ENCODE measurements at regions of chr17 and their contacts with region 1.

Region 1: GRCh38 chr17:40443583-40444327 is 505 bp downstream of the IGFBP4 start:
- DNase-seq: peak; percentile 73 to 94 (median 86)
- ATAC-seq: peak; percentile 62
- H3K4me3 ChIP-seq: peak overlapping the region; percentile 64 to 67
- H3K27ac ChIP-seq: peak overlapping the region; percentile 87 to 93
- H3K4me1 ChIP-seq: peaks cover 33 to 54% of the 10 kb centered on the region in 2 donors
- H3K27me3 ChIP-seq: peaks cover 0 to 25% of the 10 kb centered on the region in 2 donors
- CTCF ChIP-seq: peak; percentile 7 to 35

Region 2: DNA sequence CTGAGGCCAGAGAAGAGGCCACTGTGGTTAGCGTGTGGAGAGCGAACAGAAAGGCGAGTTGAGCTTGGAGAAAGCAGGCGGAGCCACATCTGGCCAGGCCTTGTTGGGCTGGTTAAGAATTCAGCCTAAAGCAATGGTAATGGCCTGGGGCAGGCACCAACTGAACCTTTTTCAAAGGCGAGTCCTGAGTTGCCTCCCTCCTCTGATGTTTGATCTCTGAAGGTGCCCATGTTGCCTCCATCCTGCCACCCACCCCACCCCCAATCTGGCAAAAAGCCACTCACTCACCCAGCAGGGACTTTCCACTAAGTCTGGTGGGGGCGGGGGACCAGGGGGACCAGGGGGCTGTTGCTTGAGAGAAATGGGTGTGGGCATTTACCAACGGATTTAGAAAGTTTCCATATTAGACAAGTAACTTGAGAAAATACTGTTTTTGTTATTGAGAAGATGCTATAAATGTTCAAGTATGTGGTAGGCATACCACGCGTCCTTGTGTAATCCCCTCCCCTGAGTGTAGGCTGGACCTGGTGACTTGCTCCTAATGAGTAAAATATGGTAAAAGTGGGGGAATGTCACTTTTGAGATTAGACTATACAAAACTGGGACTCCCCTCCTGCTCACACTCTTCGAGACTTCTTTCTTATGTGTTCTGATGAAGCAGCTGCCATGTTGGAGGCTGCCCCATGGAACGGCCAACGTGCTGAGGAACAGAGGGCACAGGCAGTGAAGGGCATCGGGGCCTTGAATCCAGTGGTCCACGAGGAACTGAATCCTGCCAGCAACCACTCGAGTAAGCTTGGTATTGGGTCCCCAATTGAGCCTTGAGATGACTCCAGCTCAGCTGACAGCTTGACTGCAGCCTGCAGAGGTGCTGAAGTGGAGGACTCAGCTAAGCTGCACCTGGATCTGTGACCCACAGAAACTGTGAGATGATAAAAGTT is 87.6 kb after region 1 on chr17:
- intact Hi-C with region 1: loop called in 1 of 2 experiments (anchors 5 kb)
- DNase-seq: peak in 1 of 4 donors; percentile 28
- ATAC-seq: no peak
- H3K4me3 ChIP-seq: no peak overlapping the region
- H3K27ac ChIP-seq: peak overlapping the region in 1 of 2 donors; percentile 23
- H3K4me1 ChIP-seq: peaks cover 19 to 32% of the 10 kb centered on the region in 2 donors
- H3K27me3 ChIP-seq: no peaks in the 10 kb centered on the region
- CTCF ChIP-seq: no peak

Region 3: DNA sequence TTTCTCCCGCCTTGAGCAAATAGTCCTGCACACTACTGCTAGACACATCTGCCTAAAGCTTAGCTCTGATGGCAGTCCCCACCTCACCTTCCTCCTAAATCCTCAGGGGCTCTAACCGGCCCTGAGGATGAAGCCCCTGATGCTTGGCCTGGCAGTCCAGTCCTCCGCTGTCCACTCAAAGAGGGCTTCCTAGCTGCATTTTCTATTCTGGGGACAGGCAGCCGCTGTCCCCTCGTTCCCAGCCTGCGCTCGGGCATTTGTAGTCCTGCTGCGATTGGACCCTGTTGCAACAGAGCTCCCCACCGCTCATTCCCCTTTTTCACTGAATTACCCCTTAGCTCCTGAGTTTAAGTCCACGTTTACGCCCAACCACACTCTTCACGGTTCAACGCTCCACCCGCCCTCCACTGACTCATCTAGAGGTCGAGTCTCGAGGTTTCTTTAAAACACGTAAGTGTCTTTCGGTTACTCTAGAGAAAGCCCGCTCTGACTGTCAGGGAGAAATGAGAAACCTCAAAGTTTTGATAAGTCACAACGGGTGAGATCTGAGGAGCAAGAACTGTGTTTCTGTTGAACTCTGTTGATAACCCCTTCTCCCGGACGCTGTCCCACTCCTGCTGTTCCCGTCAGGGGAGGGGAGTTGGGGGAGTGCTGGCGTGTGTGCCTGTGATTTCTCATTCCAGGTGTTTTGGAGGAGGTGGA is 117.0 kb after region 1 on chr17:
- intact Hi-C with region 1: no loop called
- DNase-seq: no peak
- ATAC-seq: peak; percentile 2
- H3K4me3 ChIP-seq: peak overlapping the region in 1 of 2 donors; percentile 1
- H3K27ac ChIP-seq: peak overlapping the region in 1 of 2 donors; percentile 65
- H3K4me1 ChIP-seq: peaks cover 15 to 35% of the 10 kb centered on the region in 2 donors
- H3K27me3 ChIP-seq: peaks cover 0 to 12% of the 10 kb centered on the region in 2 donors
- CTCF ChIP-seq: peak in 1 of 2 donors; percentile 27

Measured in left lung (tissue), 14 donors.